Activated CD8-positive, alpha-beta T cell treated with anti-CD3 and anti-CD28 coated beads, Interleukin-2, amount 10 ng/mL, durations not matched to agents 7 days and 5 days (primary cell): ENCODE measurements at regions of chr2 and their contacts with region 1.

Region 1: DNA sequence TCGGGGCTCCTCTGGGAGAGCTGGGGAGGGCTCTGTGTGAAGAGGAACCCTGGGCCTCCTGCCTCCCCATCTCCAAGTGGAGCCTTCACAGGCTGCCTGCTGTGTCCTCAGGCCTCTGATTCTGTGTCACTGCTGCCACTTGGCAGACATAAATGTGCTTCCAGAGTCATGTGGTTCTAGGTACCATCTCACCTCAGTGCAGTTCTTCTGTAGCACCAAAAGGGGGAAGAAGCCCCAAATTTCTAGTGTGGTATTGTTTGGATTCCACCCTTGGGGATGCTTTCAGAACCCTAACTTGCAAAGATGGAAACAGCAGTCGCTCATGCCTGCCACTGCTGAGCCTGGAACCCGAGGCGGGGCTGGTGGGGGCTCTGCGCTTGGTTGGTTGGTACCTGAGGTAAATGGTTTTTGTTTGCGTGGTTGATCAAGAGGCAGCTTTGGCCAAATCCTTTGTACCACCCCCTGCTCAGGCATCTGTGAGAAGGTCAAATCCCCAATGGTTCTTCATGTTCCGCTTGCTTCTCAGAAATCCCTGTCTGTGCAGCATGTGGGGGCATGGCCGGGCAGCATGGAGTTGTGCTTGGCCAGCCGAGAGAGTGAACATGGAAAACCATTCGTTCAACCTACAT is 27.5 kb downstream of the COA5 start:
- DNase-seq: no peak
- ATAC-seq: no peak
- H3K4me3 Mint-ChIP-seq: no peak overlapping the region
- H3K27ac Mint-ChIP-seq: no peak overlapping the region
- H3K4me1 Mint-ChIP-seq: peaks cover 3% of the 10 kb centered on the region
- H3K27me3 Mint-ChIP-seq: no peaks in the 10 kb centered on the region

Region 2: GRCh38 chr2:98568881-98569793 is 11.6 kb before region 1 on chr2:
- CTCF ChIA-PET with region 1: interaction called, 10 read pairs
- POLR2A ChIA-PET with region 1: no interaction called
- DNase-seq: peak; percentile 73
- ATAC-seq: peak; percentile 76
- H3K4me3 Mint-ChIP-seq: no peak overlapping the region
- H3K27ac Mint-ChIP-seq: peak overlapping the region; percentile 69
- H3K4me1 Mint-ChIP-seq: peaks cover 15% of the 10 kb centered on the region
- H3K27me3 Mint-ChIP-seq: no peaks in the 10 kb centered on the region